Astrocyte of the cerebellum (primary cell): ENCODE measurements at regions of chr1 and their contacts with region 1.

Region 1: GRCh38 chr1:224609333-224609732 is 6.8 kb upstream of the CNIH3 start:
- DNase-seq: no peak
- H3K4me3 ChIP-seq: no peak overlapping the region
- CTCF ChIP-seq: no peak

Region 2: DNA sequence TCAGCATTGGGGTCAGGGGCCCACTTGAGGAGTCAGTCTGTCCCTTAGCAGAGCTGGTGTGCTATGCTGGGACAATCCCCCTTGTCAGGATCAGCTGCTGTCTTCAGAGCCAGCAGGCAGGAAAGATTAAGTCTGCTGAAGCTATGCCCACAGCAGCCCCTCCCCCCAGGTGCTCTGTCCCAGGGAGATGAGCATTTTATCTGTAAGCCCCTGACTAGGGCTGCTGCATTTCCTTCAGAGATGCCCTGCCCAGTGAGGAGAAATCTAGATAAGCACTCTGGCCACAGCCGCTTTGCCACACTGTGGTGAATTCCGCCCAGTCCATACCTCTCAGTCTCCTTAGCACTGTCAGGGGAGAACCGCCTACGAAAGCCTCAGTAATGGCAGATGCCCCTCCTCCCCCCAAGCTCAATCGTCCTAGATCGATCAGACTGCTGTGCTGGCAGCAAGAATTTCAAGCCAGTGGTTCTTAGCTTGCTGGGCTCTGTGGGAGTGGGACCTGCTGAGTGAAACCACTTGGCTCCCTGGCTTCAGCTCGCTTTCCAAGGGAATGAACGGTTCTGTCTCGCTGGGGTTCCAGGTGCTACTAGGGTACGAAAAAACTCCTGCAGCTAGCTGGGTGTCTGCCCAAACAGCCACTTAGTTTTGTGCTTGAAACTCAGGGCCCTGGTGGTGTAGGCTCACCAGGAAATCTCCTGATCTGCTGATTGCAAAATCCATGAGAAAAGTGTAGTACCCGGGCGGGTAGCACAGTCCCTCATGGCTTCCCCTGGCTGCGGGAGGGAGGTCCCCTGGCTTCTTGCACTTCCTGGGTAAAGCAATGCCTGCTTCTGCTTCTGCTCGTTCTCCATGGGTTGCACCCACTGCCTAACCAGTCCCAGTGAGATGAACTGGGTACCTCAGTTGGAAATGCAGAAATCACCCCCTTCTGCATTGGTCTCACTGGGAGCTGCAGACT is 738.4 kb before region 1 on chr1:
- in situ Hi-C with region 1: no loop called
- DNase-seq: no peak
- H3K4me3 ChIP-seq: no peak overlapping the region
- CTCF ChIP-seq: no peak

Region 3: DNA sequence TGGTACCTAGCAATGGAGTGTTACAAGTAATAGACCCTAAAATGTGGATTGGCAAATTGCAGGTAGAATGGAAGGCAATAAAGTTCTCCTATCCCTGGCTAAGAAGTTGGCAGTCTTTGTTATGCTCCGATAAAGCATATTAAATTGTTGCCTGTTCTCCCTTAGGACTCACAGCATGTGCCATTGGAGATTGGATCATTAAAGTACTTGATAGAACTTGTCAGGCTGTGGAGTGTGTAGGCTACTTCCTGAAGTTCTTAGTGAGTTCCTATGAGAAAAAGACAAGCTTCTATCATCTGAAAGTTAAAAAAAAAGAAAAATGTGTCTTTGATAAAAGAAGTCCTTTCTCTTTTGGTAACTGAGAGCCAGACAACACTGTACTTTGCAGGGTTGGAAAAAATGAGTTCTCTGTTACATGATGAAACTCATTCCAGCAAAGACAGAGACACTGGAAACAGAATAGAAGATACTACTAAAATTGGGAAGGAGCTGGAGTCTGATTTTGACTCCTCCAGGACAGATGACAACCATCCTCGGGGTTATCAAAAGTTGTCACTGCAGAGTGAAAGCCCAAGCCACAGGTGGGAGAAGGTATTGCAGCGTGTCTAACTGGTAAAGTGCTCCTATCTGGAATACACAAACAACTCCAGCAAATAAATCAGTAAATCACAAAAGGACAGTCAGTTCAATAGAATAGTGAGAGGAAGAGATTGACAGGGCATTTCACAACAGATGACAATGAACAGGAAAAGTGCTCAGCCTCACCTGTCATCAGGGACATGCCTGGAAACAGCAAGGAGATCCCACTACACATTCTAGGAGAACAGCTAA is 87.2 kb before region 1 on chr1:
- in situ Hi-C with region 1: loop called (anchors 5 kb)
- DNase-seq: no peak
- H3K4me3 ChIP-seq: no peak overlapping the region
- CTCF ChIP-seq: peak; percentile 8

Region 4: GRCh38 chr1:224707843-224708725 is 98.8 kb after region 1 on chr1:
- in situ Hi-C with region 1: no loop called
- DNase-seq: peak; percentile 36
- H3K4me3 ChIP-seq: no peak overlapping the region
- CTCF ChIP-seq: no peak